ENCODE measurements at regions of chr16 and their contacts with region 1.

Region 1: DNA sequence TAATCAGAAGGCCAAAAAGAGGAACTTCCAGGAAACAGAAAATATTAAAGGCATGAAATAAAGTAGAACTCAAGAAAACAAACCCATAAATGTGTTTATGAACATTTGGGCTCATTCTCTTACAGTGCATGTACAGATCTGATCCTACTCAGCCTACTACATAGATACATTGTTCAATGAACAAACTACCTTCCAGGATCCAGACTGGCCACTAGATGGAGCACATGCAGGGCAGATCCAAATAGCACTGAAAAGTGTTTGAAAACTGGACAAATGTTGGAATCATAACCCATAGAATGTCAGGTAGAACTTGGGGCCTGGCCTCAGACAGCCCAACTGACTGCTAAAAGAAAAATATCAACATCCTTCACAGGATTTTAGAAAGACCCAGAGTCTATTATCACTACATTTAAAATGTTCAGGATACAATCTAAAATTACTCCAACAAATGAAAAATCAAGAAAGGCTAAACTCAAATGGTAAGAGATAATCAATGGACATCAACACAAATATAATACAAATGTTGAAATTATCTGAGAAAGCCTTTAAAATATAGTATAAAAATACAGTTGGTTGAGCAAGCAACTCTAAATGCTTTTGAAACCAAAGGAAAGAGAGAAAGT is 122.4 kb upstream of the NUDT7 start:
- DNase-seq: peak; percentile 77
- H3K4me3 ChIP-seq: no peak overlapping the region
- H3K27ac ChIP-seq: no peak overlapping the region
- H3K4me1 ChIP-seq: peaks cover 26% of the 10 kb centered on the region
- H3K27me3 ChIP-seq: no peaks in the 10 kb centered on the region
- CTCF ChIP-seq: peak; percentile 81 to 94
- POLR2A ChIP-seq: no peak

Region 2: GRCh38 chr16:77574867-77575624 is 24.9 kb before region 1 on chr16:
- CTCF ChIA-PET with region 1: interaction called, 7 read pairs
- POLR2A ChIA-PET with region 1: no interaction called
- dilution Hi-C with region 1: no loop called
- intact Hi-C with region 1: loop called (anchors 1 kb)
- DNase-seq: peak; percentile 98
- H3K4me3 ChIP-seq: no peak overlapping the region
- H3K27ac ChIP-seq: peak overlapping the region; percentile 95
- H3K4me1 ChIP-seq: peaks cover 49% of the 10 kb centered on the region
- H3K27me3 ChIP-seq: no peaks in the 10 kb centered on the region
- CTCF ChIP-seq: no peak
- POLR2A ChIP-seq: peak; percentile 52

Region 3: GRCh38 chr16:77788181-77789084 is 188.5 kb after region 1 on chr16 and contains the start of gene VAT1L:
- CTCF ChIA-PET with region 1: no interaction called
- POLR2A ChIA-PET with region 1: no interaction called
- dilution Hi-C with region 1: no loop called
- intact Hi-C with region 1: loop called (anchors 5 kb)
- DNase-seq: peak; percentile 54
- H3K4me3 ChIP-seq: peak within 1 kb of the TSS; percentile 41 to 61 (median 50)
- H3K27ac ChIP-seq: no peak within 1 kb of the TSS
- H3K4me1 ChIP-seq: peaks cover 4% of the 10 kb centered on the region
- H3K27me3 ChIP-seq: peaks cover 28 to 41% of the 10 kb centered on the region in 2 experiments
- CTCF ChIP-seq: no peak
- POLR2A ChIP-seq: no peak
- total RNA-seq, gene VAT1L: 1.5 and 2.1 TPM in 2 replicates

Region 4: DNA sequence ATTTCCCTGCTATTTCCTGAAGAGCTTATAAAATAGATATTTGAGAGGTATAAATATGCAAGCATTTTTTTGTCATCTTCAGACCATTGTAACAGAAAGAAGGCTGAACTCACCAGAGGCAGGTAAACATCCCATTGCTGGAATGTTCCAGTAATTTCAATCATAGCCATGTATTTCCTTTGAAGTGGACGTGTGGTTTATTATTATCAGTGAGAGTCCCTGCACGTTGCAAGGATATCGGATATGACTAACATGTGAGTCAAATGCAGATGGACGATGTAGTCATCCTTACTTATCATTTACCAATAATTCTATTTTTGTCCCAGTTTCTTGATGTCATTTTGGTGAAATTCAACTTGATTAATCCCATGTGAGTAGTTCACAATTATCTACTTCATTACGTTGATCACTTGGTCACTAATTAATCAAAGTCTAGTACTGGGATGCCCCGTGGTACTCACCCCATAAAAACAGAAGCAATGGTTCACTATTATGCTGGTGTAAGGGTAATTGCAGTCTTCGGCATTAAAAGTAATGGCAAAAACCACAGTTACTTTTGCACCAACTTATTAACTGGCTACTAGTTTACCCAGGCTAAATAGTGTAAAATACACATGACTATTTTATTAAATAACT is 277.9 kb after region 1 on chr16:
- CTCF ChIA-PET with region 1: no interaction called
- POLR2A ChIA-PET with region 1: no interaction called
- dilution Hi-C with region 1: no loop called
- intact Hi-C with region 1: loop called (anchors 2 kb)
- DNase-seq: peak; percentile 61
- H3K4me3 ChIP-seq: no peak overlapping the region
- H3K27ac ChIP-seq: peak overlapping the region; percentile 67
- H3K4me1 ChIP-seq: peaks cover 9% of the 10 kb centered on the region
- H3K27me3 ChIP-seq: no peaks in the 10 kb centered on the region
- CTCF ChIP-seq: no peak
- POLR2A ChIP-seq: no peak

Region 5: GRCh38 chr16:78002915-78003538 is 403.1 kb after region 1 on chr16:
- CTCF ChIA-PET with region 1: interaction called, 4 read pairs
- POLR2A ChIA-PET with region 1: no interaction called
- dilution Hi-C with region 1: no loop called
- intact Hi-C with region 1: loop called (anchors 2 kb)
- DNase-seq: peak; percentile 88
- H3K4me3 ChIP-seq: no peak overlapping the region
- H3K27ac ChIP-seq: no peak overlapping the region
- H3K4me1 ChIP-seq: no peaks in the 10 kb centered on the region
- H3K27me3 ChIP-seq: no peaks in the 10 kb centered on the region
- CTCF ChIP-seq: peak; percentile 87 to 88
- POLR2A ChIP-seq: no peak

Region 6: GRCh38 chr16:78072275-78072702 is 472.4 kb after region 1 on chr16:
- CTCF ChIA-PET with region 1: no interaction called
- POLR2A ChIA-PET with region 1: no interaction called
- dilution Hi-C with region 1: no loop called
- intact Hi-C with region 1: no loop called
- DNase-seq: no peak
- H3K4me3 ChIP-seq: no peak overlapping the region
- H3K27ac ChIP-seq: no peak overlapping the region
- H3K4me1 ChIP-seq: no peaks in the 10 kb centered on the region
- H3K27me3 ChIP-seq: no peaks in the 10 kb centered on the region
- CTCF ChIP-seq: no peak
- POLR2A ChIP-seq: no peak